AG04450 (cell line): ENCODE measurements at regions of chr2 and their contacts with region 1.

Region 1: DNA sequence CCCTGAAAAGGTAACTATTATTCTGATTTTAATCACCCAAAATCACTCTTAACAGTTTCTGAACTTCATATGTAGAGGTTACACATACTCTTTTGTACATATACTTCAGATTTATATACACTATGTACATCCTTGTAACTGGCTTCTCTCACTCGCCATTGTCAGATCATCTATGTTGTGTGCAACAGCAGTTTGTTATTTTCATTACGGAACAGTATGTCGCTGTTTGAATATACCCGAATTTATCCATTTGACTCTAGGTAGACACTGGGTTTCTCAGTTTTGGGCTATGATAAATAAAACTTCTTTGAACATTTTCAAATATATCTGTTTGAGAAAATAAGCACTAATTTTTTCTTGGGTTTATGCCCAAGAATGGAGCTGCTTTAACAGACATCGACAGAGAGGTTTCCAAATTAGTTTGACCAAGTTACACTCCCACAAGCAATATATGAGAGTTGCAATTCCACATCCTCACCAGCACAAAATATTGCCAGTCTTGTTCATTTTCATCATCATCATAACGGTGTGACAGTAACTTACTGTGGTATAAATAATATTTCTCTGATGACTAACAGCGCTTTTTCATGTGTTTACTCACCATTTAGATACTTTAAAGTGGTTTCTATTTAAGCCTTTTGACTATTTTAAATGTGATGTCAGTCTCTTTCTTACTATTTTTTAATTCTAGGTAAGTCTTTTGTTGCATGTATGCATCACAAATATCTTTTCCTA is 80.9 kb downstream of the SMC6 start:
- DNase-seq: no peak
- H3K4me3 ChIP-seq: no peak overlapping the region
- H3K27ac ChIP-seq: no peak overlapping the region
- H3K27me3 ChIP-seq: no peaks in the 10 kb centered on the region
- CTCF ChIP-seq: no peak

Region 2: GRCh38 chr2:16773080-16773713 is 899.6 kb before region 1 on chr2:
- CTCF ChIA-PET with region 1: interaction called, 15 read pairs
- POLR2A ChIA-PET with region 1: no interaction called
- DNase-seq: peak; percentile 2
- H3K4me3 ChIP-seq: no peak overlapping the region
- H3K27ac ChIP-seq: no peak overlapping the region
- H3K27me3 ChIP-seq: no peaks in the 10 kb centered on the region
- CTCF ChIP-seq: peak; percentile 59

Region 3: DNA sequence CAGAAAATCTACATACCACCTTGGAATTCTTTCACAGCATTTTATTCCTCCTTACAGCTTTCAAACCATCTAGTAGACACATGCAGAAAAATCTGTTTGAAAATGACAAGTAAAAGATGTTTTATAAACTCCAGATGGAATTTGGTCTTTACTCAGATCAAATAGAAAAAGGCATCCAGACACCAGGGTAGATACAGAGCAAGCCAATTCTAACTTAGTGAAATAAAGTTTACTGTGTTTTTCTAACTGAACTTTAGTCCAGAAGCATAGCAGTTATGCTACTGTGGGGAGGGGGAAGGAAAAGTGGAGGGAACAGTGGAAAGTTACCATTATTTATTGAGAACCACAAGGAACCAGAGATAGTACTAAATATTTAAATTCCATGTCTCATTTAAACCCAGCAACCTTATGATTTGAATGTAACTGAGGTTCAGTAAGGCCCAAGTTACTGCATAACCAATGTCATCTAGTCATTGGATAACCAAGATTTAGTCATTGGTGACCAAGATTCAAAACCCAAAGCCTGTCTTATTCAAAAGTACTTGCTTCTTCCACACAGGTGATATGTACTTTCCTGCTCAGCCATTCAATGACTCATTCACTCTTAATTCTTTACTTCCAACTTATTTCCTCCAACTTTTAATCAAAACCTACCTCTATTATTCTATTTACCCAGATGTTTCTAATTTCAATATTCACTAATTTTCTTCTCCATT is 212.2 kb before region 1 on chr2:
- CTCF ChIA-PET with region 1: interaction called, 10 read pairs
- POLR2A ChIA-PET with region 1: no interaction called
- DNase-seq: no peak
- H3K4me3 ChIP-seq: no peak overlapping the region
- H3K27ac ChIP-seq: no peak overlapping the region
- H3K27me3 ChIP-seq: no peaks in the 10 kb centered on the region
- CTCF ChIP-seq: no peak

Region 4: DNA sequence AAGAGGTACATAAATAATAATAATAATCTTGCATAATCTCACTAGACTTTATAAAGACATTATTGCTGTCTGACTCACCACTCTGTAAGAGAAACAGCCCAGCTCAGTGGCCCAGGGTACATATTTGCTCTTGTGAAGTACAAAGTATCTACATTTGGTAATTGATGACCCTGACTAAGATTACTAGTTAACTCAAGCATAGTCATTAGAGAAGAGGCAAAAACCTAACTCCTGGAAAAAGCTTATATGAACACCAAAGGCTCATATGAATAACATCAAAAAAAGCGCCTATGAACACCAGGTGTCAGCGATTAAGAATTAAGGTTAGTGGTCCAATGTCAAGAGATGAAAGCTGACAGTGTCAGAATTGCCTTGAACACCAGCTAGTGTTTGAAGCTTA is 192.9 kb before region 1 on chr2:
- CTCF ChIA-PET with region 1: interaction called, 11 read pairs
- POLR2A ChIA-PET with region 1: no interaction called
- DNase-seq: no peak
- H3K4me3 ChIP-seq: no peak overlapping the region
- H3K27ac ChIP-seq: no peak overlapping the region
- H3K27me3 ChIP-seq: no peaks in the 10 kb centered on the region
- CTCF ChIP-seq: no peak

Region 5: GRCh38 chr2:17557596-17557995 is 115.2 kb before region 1 on chr2:
- CTCF ChIA-PET with region 1: interaction called, 10 read pairs
- POLR2A ChIA-PET with region 1: no interaction called
- DNase-seq: no peak
- H3K4me3 ChIP-seq: no peak overlapping the region
- H3K27ac ChIP-seq: no peak overlapping the region
- H3K27me3 ChIP-seq: peaks cover 7% of the 10 kb centered on the region
- CTCF ChIP-seq: no peak

Region 6: DNA sequence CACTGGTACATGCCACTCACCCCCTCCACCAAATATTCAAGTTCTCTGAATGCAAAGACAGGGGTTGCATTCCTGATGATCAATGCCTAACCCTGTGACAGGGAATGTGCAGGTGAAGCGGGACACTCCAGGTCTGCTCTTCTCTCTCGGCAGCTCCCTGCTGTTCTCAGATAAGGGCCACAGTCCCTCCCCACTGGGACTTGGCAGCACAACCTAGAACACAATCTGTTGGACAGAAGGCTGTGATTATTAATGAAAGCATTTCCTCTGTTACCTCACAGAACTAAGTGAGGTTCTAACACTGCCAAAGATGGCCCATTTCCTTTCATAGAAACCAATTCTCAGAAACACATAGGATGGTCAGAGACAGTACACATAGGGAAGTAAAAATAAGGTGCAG is 89.6 kb before region 1 on chr2:
- CTCF ChIA-PET with region 1: no interaction called
- POLR2A ChIA-PET with region 1: no interaction called
- DNase-seq: no peak
- H3K4me3 ChIP-seq: no peak overlapping the region
- H3K27ac ChIP-seq: no peak overlapping the region
- H3K27me3 ChIP-seq: no peaks in the 10 kb centered on the region
- CTCF ChIP-seq: no peak

Region 7: GRCh38 chr2:17646081-17646554 is 26.6 kb before region 1 on chr2:
- CTCF ChIA-PET with region 1: interaction called, 118 read pairs
- POLR2A ChIA-PET with region 1: interaction called, 3 read pairs
- DNase-seq: peak; percentile 72
- H3K4me3 ChIP-seq: no peak overlapping the region
- H3K27ac ChIP-seq: no peak overlapping the region
- H3K27me3 ChIP-seq: no peaks in the 10 kb centered on the region
- CTCF ChIP-seq: peak; percentile 84

Region 8: GRCh38 chr2:17658251-17658843 is 14.4 kb before region 1 on chr2:
- CTCF ChIA-PET with region 1: interaction called, 53 read pairs
- POLR2A ChIA-PET with region 1: no interaction called
- DNase-seq: no peak
- H3K4me3 ChIP-seq: no peak overlapping the region
- H3K27ac ChIP-seq: no peak overlapping the region
- H3K27me3 ChIP-seq: no peaks in the 10 kb centered on the region
- CTCF ChIP-seq: no peak

Region 9: GRCh38 chr2:18925296-18925695 is 1252.5 kb after region 1 on chr2:
- CTCF ChIA-PET with region 1: no interaction called
- POLR2A ChIA-PET with region 1: no interaction called
- DNase-seq: peak; percentile 81
- H3K4me3 ChIP-seq: no peak overlapping the region
- H3K27ac ChIP-seq: no peak overlapping the region
- H3K27me3 ChIP-seq: no peaks in the 10 kb centered on the region
- CTCF ChIP-seq: no peak